Endothelial cell of umbilical vein (primary cell): ENCODE measurements at regions of chr12 and their contacts with region 1.

Region 1: DNA sequence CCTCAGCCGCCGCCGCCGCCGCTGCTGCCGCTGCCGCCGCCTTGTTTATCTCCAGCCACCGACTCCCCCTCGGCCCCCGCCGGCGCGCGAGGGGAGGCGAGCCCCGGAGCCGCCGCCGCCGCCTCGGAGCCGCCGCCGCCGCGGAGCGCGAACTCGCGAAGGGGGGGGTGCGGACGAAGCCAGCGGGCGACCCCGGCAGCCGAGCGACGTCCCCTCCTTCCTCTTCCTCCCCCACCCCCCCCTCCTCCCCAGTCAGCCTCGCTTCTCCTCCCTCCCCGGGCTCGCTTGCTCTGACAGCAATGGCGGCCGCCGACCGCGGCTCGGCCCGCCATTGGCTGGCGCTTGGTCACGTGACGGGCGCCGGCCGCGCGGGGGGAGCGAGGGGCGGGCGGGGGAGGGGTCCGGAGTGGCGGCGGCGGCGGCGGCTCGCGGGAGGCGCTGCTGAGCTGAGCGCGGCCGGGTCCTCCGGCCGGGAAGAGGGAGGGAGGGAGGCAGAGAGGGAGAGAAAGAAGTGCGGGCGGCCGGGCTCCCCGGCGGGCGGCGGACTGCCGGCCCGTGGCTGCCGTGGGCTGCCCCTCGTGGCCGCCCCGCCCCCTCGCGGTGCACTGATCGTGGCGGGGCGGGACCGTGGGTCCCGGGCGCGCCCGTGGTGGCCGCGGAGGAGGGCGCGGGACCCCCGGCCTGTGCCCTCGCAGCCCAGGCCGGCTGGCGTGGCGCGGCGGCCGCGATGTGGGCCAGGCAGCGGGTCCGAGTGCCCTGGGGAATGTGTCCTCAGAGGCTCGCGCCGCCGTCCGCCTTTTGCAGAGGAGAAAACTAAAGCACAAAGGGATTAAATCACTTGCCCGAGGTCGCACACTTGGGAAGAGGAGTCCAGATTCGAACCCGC is at the start of gene MED13L:
- DNase-seq: peak; percentile 82
- H3K4me3 ChIP-seq: peak within 1 kb of the TSS; percentile 90 to 94 (median 91)
- H3K27ac ChIP-seq: peak within 1 kb of the TSS; percentile 62
- H3K4me1 ChIP-seq: peaks cover 19% of the 10 kb centered on the region
- H3K27me3 ChIP-seq: no peaks in the 10 kb centered on the region
- CTCF ChIP-seq: peak; percentile 5 to 24
- POLR2A ChIP-seq: no peak
- total RNA-seq, gene MED13L: 82.7 and 93.6 TPM in 2 replicates

Region 2: DNA sequence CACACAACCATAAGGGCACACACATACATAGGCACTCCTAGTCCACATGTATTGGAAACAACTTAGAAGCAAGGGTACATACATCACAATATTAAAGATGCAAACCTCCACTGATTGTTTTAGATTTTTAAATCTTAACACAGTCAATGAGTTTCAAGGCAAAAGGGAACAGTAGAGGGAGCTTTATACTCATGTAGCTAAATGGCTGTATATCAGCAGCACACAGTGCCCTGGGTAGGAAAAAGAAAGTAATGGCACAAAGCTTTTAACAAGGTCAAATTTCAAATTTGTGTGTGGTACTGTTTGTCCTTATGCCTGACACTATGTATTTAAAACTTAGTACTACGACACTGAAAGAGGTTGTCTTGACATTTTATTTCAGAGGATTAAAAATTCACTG is 262.1 kb before region 1 on chr12:
- CTCF ChIA-PET with region 1: interaction called, 10 read pairs
- POLR2A ChIA-PET with region 1: no interaction called
- dilution Hi-C with region 1: no loop called
- intact Hi-C with region 1: loop called (anchors 5 kb)
- DNase-seq: peak; percentile 64
- H3K4me3 ChIP-seq: no peak overlapping the region
- H3K27ac ChIP-seq: no peak overlapping the region
- H3K4me1 ChIP-seq: no peaks in the 10 kb centered on the region
- H3K27me3 ChIP-seq: no peaks in the 10 kb centered on the region
- CTCF ChIP-seq: peak; percentile 21 to 34
- POLR2A ChIP-seq: no peak

Region 3: GRCh38 chr12:116142936-116143898 is 134.4 kb before region 1 on chr12:
- CTCF ChIA-PET with region 1: interaction called, 20 read pairs
- POLR2A ChIA-PET with region 1: interaction called, 5 read pairs
- dilution Hi-C with region 1: no loop called
- intact Hi-C with region 1: loop called (anchors 1 kb)
- DNase-seq: peak; percentile 97
- H3K4me3 ChIP-seq: peak overlapping the region in 1 of 3 experiments; percentile 18
- H3K27ac ChIP-seq: peak overlapping the region; percentile 99
- H3K4me1 ChIP-seq: peaks cover 28% of the 10 kb centered on the region
- H3K27me3 ChIP-seq: no peaks in the 10 kb centered on the region
- CTCF ChIP-seq: no peak
- POLR2A ChIP-seq: peak; percentile 25

Region 4: GRCh38 chr12:116319898-116320621 is 42.4 kb after region 1 on chr12:
- CTCF ChIA-PET with region 1: no interaction called
- POLR2A ChIA-PET with region 1: no interaction called
- dilution Hi-C with region 1: no loop called
- intact Hi-C with region 1: no loop called
- DNase-seq: peak; percentile 72
- H3K4me3 ChIP-seq: no peak overlapping the region
- H3K27ac ChIP-seq: no peak overlapping the region
- H3K4me1 ChIP-seq: peaks cover 8% of the 10 kb centered on the region
- H3K27me3 ChIP-seq: no peaks in the 10 kb centered on the region
- CTCF ChIP-seq: no peak
- POLR2A ChIP-seq: no peak

Region 5: GRCh38 chr12:116358893-116359761 is 81.5 kb after region 1 on chr12:
- CTCF ChIA-PET with region 1: interaction called, 3 read pairs
- POLR2A ChIA-PET with region 1: no interaction called
- dilution Hi-C with region 1: no loop called
- intact Hi-C with region 1: loop called (anchors 1 kb)
- DNase-seq: peak; percentile 99
- H3K4me3 ChIP-seq: no peak overlapping the region
- H3K27ac ChIP-seq: peak overlapping the region; percentile 68
- H3K4me1 ChIP-seq: peaks cover 18% of the 10 kb centered on the region
- H3K27me3 ChIP-seq: no peaks in the 10 kb centered on the region
- CTCF ChIP-seq: no peak
- POLR2A ChIP-seq: peak; percentile 47

Region 6: GRCh38 chr12:116455540-116456329 is 178.1 kb after region 1 on chr12:
- CTCF ChIA-PET with region 1: interaction called, 6 read pairs
- POLR2A ChIA-PET with region 1: interaction called, 4 read pairs
- dilution Hi-C with region 1: no loop called
- intact Hi-C with region 1: loop called (anchors 1 kb)
- DNase-seq: peak; percentile 98
- H3K4me3 ChIP-seq: peak overlapping the region in 2 of 3 experiments; percentile 14 to 15
- H3K27ac ChIP-seq: peak overlapping the region; percentile 96
- H3K4me1 ChIP-seq: peaks cover 17% of the 10 kb centered on the region
- H3K27me3 ChIP-seq: no peaks in the 10 kb centered on the region
- CTCF ChIP-seq: no peak
- POLR2A ChIP-seq: no peak

Region 7: GRCh38 chr12:116533343-116534251 is 256.0 kb after region 1 on chr12:
- CTCF ChIA-PET with region 1: interaction called, 3 read pairs
- POLR2A ChIA-PET with region 1: no interaction called
- dilution Hi-C with region 1: no loop called
- intact Hi-C with region 1: loop called (anchors 5 kb)
- DNase-seq: peak; percentile 77
- H3K4me3 ChIP-seq: peak overlapping the region; percentile 51 to 59 (median 55)
- H3K27ac ChIP-seq: no peak overlapping the region
- H3K4me1 ChIP-seq: peaks cover 5% of the 10 kb centered on the region
- H3K27me3 ChIP-seq: no peaks in the 10 kb centered on the region
- CTCF ChIP-seq: no peak
- POLR2A ChIP-seq: no peak

Region 8: GRCh38 chr12:116687888-116688287 is 410.3 kb after region 1 on chr12:
- CTCF ChIA-PET with region 1: no interaction called
- POLR2A ChIA-PET with region 1: no interaction called
- dilution Hi-C with region 1: no loop called
- intact Hi-C with region 1: loop called (anchors 5 kb)
- DNase-seq: peak; percentile 28
- H3K4me3 ChIP-seq: no peak overlapping the region
- H3K27ac ChIP-seq: no peak overlapping the region
- H3K4me1 ChIP-seq: no peaks in the 10 kb centered on the region
- H3K27me3 ChIP-seq: peaks cover 3% of the 10 kb centered on the region in 2 experiments
- CTCF ChIP-seq: peak; percentile 42 to 62
- POLR2A ChIP-seq: no peak

Region 9: DNA sequence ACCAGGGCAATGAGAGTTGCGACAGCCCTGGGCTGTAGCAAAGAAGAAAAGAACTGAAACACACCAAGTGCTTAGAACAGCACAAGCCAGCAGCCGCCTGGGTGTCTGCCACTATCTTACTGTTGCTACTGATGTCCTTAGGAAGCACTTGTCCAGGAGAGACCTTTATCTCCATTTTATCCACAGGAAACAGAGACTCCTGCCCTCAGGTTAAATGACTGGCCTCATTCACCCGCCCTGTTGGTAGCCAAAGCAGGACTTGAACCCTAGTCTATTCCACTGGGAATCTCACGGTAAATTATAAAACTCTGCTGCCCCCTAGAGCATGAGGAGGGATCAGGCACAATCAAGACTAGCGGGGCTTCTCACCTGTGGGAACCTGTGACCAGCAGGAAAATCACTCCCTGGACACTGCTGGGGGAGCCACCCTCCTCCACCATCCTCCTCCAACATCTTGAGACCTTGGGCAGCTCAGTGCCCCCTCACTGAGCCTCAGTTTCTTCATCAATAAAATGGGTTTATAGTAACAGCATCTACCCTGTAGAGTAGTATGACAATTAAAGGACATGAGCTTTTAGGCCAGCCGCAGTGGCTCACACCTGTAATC is 842.1 kb after region 1 on chr12:
- CTCF ChIA-PET with region 1: no interaction called
- POLR2A ChIA-PET with region 1: no interaction called
- dilution Hi-C with region 1: no loop called
- intact Hi-C with region 1: no loop called
- DNase-seq: no peak
- H3K4me3 ChIP-seq: no peak overlapping the region
- H3K27ac ChIP-seq: no peak overlapping the region
- H3K4me1 ChIP-seq: peaks cover 3% of the 10 kb centered on the region
- H3K27me3 ChIP-seq: no peaks in the 10 kb centered on the region
- CTCF ChIP-seq: peak; percentile 46 to 51
- POLR2A ChIP-seq: no peak